ENCODE measurements at regions of chr12 and their contacts with region 1.

Region 1: GRCh38 chr12:59077575-59078426 is 157.5 kb upstream of the LRIG3 start:
- H3K4me3 ChIP-seq: no peak overlapping the region
- H3K27ac ChIP-seq: no peak overlapping the region
- H3K4me1 ChIP-seq: peaks cover 10% of the 10 kb centered on the region
- CTCF ChIP-seq: no peak

Region 2: DNA sequence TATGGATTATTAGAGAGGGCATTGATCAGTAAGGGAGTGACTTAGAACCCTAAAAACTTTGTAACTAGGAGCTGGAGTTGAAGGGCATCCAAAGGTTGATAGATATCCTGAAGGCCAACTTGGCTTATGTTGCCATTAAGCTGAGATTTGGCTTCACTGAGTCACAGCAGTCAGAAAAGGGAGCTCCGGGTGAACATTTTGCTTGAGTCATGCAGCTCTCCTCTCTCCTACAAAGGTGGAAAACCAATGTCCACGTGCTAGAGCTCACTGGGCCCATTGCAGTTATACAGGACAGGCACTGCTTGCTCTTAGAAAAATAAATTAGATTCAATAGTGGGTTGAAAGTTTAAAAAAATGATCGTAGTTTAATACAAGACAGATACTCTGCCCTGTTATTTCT is 70.2 kb before region 1 on chr12:
- CTCF ChIA-PET with region 1: no interaction called
- POLR2A ChIA-PET with region 1: no interaction called
- H3K4me3 ChIP-seq: no peak overlapping the region
- H3K27ac ChIP-seq: no peak overlapping the region
- H3K4me1 ChIP-seq: no peaks in the 10 kb centered on the region
- CTCF ChIP-seq: no peak

Region 3: DNA sequence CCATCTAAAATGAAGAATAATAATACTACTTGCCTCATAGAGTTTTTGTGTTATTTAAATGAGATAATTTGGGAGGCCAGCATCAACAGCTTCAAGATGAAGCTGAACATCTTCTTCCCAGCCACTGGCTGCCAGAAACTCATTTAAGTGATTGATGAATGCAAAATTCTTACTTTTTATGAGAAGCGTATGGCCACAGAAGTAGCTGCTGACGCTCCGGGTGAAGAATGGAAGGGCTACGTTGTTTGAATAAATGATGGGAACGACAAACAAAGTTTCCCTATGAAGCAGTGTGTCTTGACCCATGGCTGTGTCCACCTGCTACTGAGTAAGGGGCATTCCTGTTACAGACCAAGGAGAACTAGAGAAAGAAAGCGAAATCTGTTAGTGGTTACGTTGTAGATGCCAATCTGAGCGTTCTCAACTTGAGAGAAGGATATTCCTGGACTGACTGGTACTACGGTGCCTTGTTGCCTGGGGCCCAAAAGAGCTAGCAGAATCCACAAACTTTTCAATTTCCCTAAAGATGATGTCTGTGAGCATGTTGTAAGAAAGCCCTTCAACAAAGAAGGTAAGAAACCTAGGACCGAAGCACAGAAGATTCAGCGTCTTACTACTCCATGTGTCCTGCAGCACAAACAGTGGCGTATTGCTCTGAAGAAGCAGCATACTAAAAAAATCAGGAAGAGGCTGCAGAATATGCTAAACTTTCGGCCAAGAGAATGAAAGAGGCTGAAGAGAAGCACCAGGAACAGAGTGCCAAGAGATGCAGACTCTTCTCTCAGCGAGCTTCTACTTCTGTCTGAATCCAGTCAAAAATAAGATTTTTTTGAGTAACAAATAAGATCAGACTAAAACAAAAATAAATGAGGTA is 57.5 kb before region 1 on chr12:
- CTCF ChIA-PET with region 1: no interaction called
- POLR2A ChIA-PET with region 1: no interaction called
- H3K4me3 ChIP-seq: no peak overlapping the region
- H3K27ac ChIP-seq: no peak overlapping the region
- H3K4me1 ChIP-seq: peaks cover 1% of the 10 kb centered on the region; the same call in 1 of the 2 replicates
- CTCF ChIP-seq: no peak

Region 4: GRCh38 chr12:59046763-59047534 is 30.9 kb before region 1 on chr12:
- CTCF ChIA-PET with region 1: interaction called, 3 read pairs
- POLR2A ChIA-PET with region 1: interaction called, 13 read pairs
- H3K4me3 ChIP-seq: no peak overlapping the region
- H3K27ac ChIP-seq: no peak overlapping the region
- H3K4me1 ChIP-seq: no peaks in the 10 kb centered on the region
- CTCF ChIP-seq: no peak

Measured in HEK293 (cell line).